ENCODE measurements at regions of chr18 and their contacts with region 1.

Region 1: DNA sequence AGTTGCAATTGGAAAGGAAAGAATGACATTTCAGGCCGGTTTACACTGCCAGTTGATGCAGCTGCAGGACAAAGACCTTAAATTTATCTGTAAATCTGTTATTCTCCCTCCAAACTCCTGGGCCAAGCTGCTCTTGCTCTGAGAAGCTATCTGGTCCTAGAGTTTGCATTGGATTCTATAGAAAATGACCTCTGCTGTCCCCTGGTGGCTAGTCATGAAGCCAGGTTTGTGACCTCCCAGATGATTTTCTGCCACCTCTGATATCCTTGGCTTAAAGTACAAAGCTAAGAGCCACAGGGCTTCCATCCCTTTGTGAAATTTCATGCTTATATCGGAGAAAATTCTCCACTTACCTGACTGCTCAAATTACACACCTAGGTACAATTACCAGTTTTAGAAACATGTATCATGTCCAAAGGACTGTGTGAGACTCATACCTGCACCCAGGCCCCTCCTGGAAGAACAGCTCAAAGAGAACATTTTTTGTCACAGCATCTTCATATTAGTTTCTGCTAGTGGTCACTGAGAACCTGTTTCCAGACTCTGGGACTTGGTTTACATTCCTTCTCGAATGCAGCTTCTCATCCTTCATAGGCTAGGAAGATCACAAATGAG is 28.9 kb upstream of the IER3IP1 start:
- H3K4me3 Mint-ChIP-seq: no peak overlapping the region
- H3K27ac Mint-ChIP-seq: no peak overlapping the region
- H3K4me1 Mint-ChIP-seq: no peaks in the 10 kb centered on the region
- H3K27me3 Mint-ChIP-seq: peaks cover 23% of the 10 kb centered on the region

Region 2: GRCh38 chr18:47050468-47050867 is 154.5 kb before region 1 on chr18:
- intact Hi-C with region 1: loop called (anchors 1 kb)
- H3K4me3 Mint-ChIP-seq: no peak overlapping the region
- H3K27ac Mint-ChIP-seq: no peak overlapping the region
- H3K4me1 Mint-ChIP-seq: no peaks in the 10 kb centered on the region
- H3K27me3 Mint-ChIP-seq: peaks cover 3% of the 10 kb centered on the region

Region 3: DNA sequence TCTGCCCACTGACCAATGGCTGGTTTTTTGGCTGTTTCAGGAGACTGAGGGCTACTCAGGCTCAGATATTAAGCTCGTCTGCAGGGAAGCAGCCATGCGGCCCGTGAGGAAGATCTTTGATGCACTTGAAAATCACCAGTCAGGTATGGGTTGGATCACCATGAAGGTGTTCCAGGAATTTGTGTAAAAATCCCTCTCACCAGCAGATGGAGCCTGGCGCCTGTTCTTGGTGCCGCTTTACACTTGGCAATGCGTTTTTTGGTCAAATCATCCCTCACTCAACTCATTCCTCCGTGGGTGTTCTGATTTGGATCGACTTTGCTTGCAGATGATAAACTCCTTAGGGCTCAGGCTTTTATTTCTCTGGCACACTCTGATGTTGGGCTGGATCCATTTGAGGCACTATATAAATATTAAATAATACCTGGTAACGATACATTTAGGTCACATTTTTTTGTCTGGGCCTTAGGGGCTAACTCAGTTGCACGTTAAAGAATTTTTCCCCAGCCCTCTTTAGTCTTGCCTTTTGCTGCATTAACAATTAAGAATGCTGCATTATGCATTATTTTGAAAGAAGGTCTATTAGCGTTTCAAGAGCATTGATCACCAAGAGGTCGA is 104.7 kb before region 1 on chr18:
- intact Hi-C with region 1: loop called (anchors 2 kb)
- H3K4me3 Mint-ChIP-seq: no peak overlapping the region
- H3K27ac Mint-ChIP-seq: no peak overlapping the region
- H3K4me1 Mint-ChIP-seq: no peaks in the 10 kb centered on the region
- H3K27me3 Mint-ChIP-seq: no peaks in the 10 kb centered on the region